ENCODE measurements at regions of chr16 and their contacts with region 1.

Region 1: DNA sequence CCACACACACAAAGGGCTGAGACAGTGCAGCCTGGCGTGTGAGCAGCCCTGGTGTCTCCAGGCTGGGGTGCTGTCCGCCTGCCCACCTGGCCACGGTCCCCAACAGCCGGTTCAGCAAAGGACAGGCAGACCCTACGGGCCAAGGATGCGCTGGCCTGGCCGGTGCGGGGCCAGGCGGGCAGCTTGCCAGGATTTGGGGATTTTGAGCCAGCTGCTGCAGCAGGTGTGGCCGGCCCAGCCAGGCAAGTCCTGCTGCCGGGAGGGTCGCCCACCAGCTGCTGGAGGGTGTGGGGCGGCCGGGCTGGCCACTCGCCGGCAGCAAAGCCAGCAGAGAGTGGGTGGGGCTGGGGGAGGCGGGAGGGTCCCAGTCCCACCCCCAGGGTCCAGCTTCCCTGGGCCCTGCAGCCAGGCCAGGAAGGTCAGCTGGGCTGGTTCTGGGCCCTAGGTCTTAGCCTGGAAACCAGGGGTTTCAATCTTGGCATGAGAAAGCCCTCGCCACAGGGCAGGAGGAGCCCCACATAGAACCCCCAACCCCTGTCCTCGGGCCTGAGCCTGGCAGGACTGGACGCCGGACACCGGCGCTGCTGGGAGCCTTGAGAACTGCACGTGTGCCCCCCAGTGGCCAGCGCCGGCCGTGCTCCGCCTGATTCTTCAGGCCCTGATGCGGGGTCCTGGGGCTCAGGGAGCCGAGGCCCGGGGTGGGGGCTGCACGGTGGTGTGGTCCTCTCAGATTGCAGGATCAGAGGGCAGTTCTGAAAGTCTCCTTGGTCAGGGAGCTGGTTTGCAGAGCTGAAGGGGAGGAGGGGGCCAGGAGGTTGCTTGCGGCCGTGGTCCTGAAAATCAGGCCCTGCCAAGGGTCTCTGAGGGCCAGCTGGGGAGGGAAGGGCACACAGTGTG is 17.6 kb upstream of the SSTR5 start:
- DNase-seq: peak in 1 of 2 donors; percentile 52
- ATAC-seq: peak; percentile 43 to 60
- H3K4me3 ChIP-seq: no peak overlapping the region
- H3K27ac ChIP-seq: no peak overlapping the region
- H3K4me1 ChIP-seq: no peaks in the 10 kb centered on the region
- H3K27me3 ChIP-seq: peaks cover 9 to 36% (median 35%) of the 10 kb centered on the region in 3 donors
- CTCF ChIP-seq: peak; percentile 56 to 78 (median 74)
- POLR2A ChIP-seq: no peak

Region 2: GRCh38 chr16:807347-808084 is 247.4 kb before region 1 on chr16:
- in situ Hi-C with region 1: loop called in 1 of 4 experiments (anchors 25 kb)
- intact Hi-C with region 1: loop called (anchors 5 kb)
- DNase-seq: peak; percentile 58 to 81
- ATAC-seq: peak; percentile 73 to 88
- H3K4me3 ChIP-seq: peak overlapping the region; percentile 62 to 74 (median 66)
- H3K27ac ChIP-seq: peak overlapping the region; percentile 74 to 87 (median 78)
- H3K4me1 ChIP-seq: no peaks in the 10 kb centered on the region
- H3K27me3 ChIP-seq: peaks cover 24 to 40% (median 39%) of the 10 kb centered on the region in 3 donors
- CTCF ChIP-seq: no peak
- POLR2A ChIP-seq: peak; percentile 41 to 42

Region 3: DNA sequence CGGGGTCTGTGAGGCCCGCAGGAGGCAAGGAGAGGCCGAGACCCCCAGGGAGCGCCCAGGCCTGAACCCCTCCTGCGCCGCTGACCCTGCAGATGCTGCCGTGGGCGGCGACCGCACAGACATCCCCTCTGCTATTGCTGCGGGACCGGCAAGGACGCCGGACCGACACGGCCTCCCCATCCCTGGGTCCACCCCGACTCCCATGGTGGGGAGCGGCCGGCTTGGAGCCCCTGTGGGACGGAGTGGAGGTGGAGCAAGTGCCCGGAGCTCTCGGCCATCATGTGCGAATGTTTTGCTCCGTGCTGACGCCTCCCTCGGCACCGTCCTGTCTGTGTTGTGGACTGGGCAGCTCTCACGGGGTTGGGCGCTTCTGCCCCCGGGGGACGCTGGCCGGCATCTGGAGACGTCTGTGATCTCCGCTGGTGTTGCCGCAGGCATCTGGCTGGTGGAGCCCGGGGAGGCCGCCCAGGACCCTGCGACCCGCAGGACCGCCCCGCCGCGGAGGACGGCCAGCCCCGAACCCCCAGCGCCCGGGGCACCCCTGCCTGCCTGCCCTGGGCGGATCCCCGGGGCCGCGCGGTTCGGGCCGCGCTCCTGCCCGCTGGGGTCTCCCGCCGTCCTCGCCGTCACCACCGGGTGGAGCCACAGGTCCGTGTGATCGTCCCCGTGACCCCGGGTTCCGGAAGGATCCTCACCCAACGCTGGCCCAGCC is 241.5 kb before region 1 on chr16:
- in situ Hi-C with region 1: loop called in 1 of 4 experiments (anchors 25 kb)
- intact Hi-C with region 1: loop called (anchors 5 kb)
- DNase-seq: no peak
- ATAC-seq: no peak
- H3K4me3 ChIP-seq: no peak overlapping the region
- H3K27ac ChIP-seq: no peak overlapping the region
- H3K4me1 ChIP-seq: no peaks in the 10 kb centered on the region
- H3K27me3 ChIP-seq: peaks cover 43 to 57% (median 51%) of the 10 kb centered on the region in 3 donors
- CTCF ChIP-seq: peak; percentile 25 to 51 (median 43)
- POLR2A ChIP-seq: no peak

Region 4: GRCh38 chr16:970766-971581 is 83.9 kb before region 1 on chr16 and contains the start of gene LMF1:
- in situ Hi-C with region 1: no loop called
- intact Hi-C with region 1: no loop called
- DNase-seq: peak; percentile 84 to 91
- ATAC-seq: peak; percentile 71 to 79
- H3K4me3 ChIP-seq: peak within 1 kb of the TSS; percentile 71 to 90 (median 78)
- H3K27ac ChIP-seq: peak within 1 kb of the TSS; percentile 77 to 88 (median 84)
- H3K4me1 ChIP-seq: peaks cover 16 to 25% of the 10 kb centered on the region in 2 donors
- H3K27me3 ChIP-seq: peaks cover 6 to 16% (median 12%) of the 10 kb centered on the region in 3 donors
- CTCF ChIP-seq: no peak
- POLR2A ChIP-seq: peak; percentile 74 to 79
- total RNA-seq, gene LMF1: 7.7 to 15.8 (median 10.2) TPM

Region 5: GRCh38 chr16:1105888-1106620 is 51.1 kb after region 1 on chr16:
- in situ Hi-C with region 1: no loop called
- intact Hi-C with region 1: loop called (anchors 1 kb)
- DNase-seq: no peak
- ATAC-seq: no peak
- H3K4me3 ChIP-seq: no peak overlapping the region
- H3K27ac ChIP-seq: no peak overlapping the region
- H3K4me1 ChIP-seq: peaks cover 0 to 4% of the 10 kb centered on the region in 2 donors
- H3K27me3 ChIP-seq: peaks cover 28 to 52% (median 39%) of the 10 kb centered on the region in 3 donors
- CTCF ChIP-seq: peak; percentile 32 to 74 (median 70)
- POLR2A ChIP-seq: no peak

Region 6: GRCh38 chr16:1261131-1261892 is 206.4 kb after region 1 on chr16:
- in situ Hi-C with region 1: no loop called
- intact Hi-C with region 1: no loop called
- DNase-seq: no peak
- ATAC-seq: no peak
- H3K4me3 ChIP-seq: no peak overlapping the region
- H3K27ac ChIP-seq: no peak overlapping the region
- H3K4me1 ChIP-seq: no peaks in the 10 kb centered on the region
- H3K27me3 ChIP-seq: peaks cover 34 to 55% (median 45%) of the 10 kb centered on the region in 3 donors
- CTCF ChIP-seq: no peak
- POLR2A ChIP-seq: no peak

Measured in gastrocnemius medialis (tissue), 4 donors.